Left cardiac atrium (tissue), 4 donors: ENCODE measurements at regions of chr10 and their contacts with region 1.

Region 1: DNA sequence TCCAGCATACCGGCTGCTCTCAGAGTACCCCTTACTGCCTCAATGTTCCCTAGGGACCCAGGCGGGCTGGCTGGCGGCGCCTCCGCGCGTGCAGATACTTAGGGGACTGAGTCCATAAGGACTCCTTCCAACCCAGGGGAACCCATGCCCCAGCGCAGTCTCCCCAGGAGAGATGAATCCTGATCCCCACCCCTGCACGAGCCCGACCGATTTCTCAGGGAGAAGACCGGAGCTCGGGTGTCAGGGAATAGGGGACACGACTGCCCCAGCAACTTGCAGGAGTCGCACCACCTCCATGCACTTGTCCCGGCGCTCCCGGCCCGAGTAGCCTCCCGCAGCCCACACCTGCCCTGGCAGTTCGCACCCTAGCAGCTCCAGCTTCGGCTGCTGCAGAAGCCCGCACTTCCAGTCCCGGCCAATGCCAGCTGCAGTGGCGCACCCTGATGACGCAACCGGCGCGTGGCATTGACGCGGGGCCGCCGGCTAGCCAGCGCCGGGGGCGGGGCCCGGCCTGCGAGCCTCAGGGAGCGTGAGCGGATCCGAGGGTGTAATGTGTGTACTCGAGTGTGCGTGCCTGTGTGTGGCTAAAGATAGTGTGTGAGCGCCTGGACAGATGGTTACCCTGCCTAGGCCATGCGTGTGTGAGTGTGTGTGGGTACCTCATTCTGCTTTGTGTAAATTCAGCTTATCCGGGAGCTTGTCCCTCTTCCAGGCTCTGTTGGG is at the start of gene GPAM:
- DNase-seq: peak; percentile 95
- ATAC-seq: peak; percentile 95 to 99
- total RNA-seq, gene GPAM: 137 to 343 TPM

Region 2: GRCh38 chr10:112244197-112244596 is 60.7 kb after region 1 on chr10:
- intact Hi-C with region 1: no loop called
- DNase-seq: no peak
- ATAC-seq: no peak

Region 3: GRCh38 chr10:112307358-112308124 is 124.1 kb after region 1 on chr10:
- intact Hi-C with region 1: loop called in 1 of 2 experiments (anchors 5 kb)
- DNase-seq: no peak
- ATAC-seq: peak; percentile 49 to 59

Region 4: GRCh38 chr10:112344261-112344660 is 160.8 kb after region 1 on chr10:
- intact Hi-C with region 1: no loop called
- DNase-seq: no peak
- ATAC-seq: no peak